IMR-90 (cell line): ENCODE measurements at regions of chr12 and their contacts with region 1.

Region 1: DNA sequence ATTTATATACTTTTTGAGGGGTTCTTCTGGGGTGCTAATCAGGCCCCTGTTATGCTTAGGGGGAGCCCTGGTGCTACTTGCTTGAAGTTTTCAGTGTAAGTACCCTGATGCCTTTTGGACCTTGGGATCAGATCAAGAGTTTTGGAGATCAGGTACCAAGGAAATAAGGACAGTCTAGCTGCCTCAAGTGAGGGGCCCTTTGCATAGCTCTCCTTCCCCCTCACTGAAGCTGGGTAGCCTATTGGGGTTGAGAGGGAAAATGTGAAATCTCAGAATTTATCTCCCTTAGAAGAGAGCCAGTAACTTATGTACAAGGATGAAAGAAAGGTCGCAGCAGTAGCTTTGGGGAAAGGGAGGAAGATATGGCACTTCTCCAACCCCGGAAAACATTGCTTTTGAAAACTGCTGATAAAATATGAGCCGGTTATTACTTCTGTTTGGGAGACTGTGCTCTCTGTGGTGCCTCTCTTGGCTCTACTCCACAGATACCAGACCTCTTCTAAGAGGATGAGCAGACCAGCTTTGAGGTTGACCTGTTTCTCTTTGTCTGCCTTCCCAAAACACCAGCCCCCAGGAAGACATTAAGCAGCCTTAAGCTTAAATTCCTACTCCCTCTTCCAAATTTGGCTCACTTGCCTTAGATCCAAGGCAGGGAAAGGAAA is 8.8 kb upstream of the AMHR2 start:
- DNase-seq: no peak
- ATAC-seq: peak; percentile 35
- H3K4me3 ChIP-seq: no peak overlapping the region
- H3K27ac ChIP-seq: no peak overlapping the region
- H3K4me1 ChIP-seq: peaks cover 8% of the 10 kb centered on the region; the same call in 1 of the 2 replicates
- H3K27me3 ChIP-seq: no peaks in the 10 kb centered on the region
- CTCF ChIP-seq: no peak
- POLR2A ChIP-seq: no peak
- RAD21 ChIP-seq: no peak

Region 2: DNA sequence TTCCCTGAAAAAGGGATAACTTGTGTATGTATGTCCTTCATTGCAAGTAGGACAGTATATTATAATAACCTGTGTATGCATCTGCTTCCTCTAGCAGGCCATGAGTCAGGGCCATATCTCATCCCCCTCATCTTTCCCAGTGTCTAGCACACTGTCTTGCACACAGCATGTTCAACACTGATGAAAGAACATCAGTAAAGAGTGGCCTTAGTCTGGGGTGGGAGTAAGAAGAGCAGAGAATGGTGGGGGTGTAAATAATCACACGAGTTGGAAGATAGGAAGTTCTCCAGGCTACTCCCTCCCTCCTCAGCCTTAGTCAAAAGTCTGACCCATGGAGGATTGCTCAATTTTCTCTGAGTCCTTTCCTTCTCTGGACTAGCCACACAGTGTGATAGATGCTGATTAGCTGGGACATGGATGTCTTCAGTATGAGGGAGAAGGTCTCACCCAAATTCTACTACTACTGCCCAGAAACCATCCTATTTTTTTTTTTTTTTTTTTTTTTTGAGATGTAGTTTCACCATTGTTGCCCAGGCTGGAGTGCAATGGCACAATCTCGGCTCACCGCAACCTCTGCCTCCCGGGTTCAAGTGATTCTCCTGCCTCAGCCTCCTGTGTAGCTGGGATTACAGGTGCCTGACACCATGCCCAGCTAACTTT is 49.5 kb before region 1 on chr12:
- CTCF ChIA-PET with region 1: no interaction called
- POLR2A ChIA-PET with region 1: no interaction called
- dilution Hi-C with region 1: no loop called
- in situ Hi-C with region 1: no loop called
- intact Hi-C with region 1: loop called (anchors 2 kb)
- DNase-seq: peak; percentile 49
- ATAC-seq: peak; percentile 53
- H3K4me3 ChIP-seq: no peak overlapping the region
- H3K27ac ChIP-seq: no peak overlapping the region
- H3K4me1 ChIP-seq: peaks cover 2% of the 10 kb centered on the region; the same call in 1 of the 2 replicates
- H3K27me3 ChIP-seq: no peaks in the 10 kb centered on the region
- CTCF ChIP-seq: no peak
- POLR2A ChIP-seq: no peak
- RAD21 ChIP-seq: no peak